ENCODE measurements at regions of chr1 and their contacts with region 1.

Region 1: GRCh38 chr1:226308723-226309315 is at the start of gene LIN9:
- DNase-seq: peak; percentile 91
- H3K4me3 ChIP-seq: peak within 1 kb of the TSS; percentile 81 to 98 (median 85)
- H3K27ac ChIP-seq: peak within 1 kb of the TSS; percentile 75
- H3K4me1 ChIP-seq: peaks cover 13% of the 10 kb centered on the region
- H3K27me3 ChIP-seq: peaks cover 2 to 4% of the 10 kb centered on the region in 2 experiments
- CTCF ChIP-seq: peak in 1 of 2 donors; percentile 5
- POLR2A ChIP-seq: peak; percentile 54
- total RNA-seq, gene LIN9: 7.6 and 9.4 TPM in 2 replicates

Region 2: GRCh38 chr1:226186124-226187018 is 122.4 kb before region 1 on chr1 and contains the start of gene ACBD3:
- CTCF ChIA-PET with region 1: no interaction called
- POLR2A ChIA-PET with region 1: no interaction called
- dilution Hi-C with region 1: no loop called
- intact Hi-C with region 1: loop called (anchors 1 kb)
- DNase-seq: peak; percentile 82
- H3K4me3 ChIP-seq: peak within 1 kb of the TSS; percentile 68 to 93 (median 70)
- H3K27ac ChIP-seq: peak within 1 kb of the TSS; percentile 66
- H3K4me1 ChIP-seq: peaks cover 12% of the 10 kb centered on the region
- H3K27me3 ChIP-seq: no peaks in the 10 kb centered on the region
- CTCF ChIP-seq: peak in 1 of 2 donors; percentile 8
- POLR2A ChIP-seq: peak; percentile 84
- total RNA-seq, gene ACBD3: 36.4 and 37.0 TPM in 2 replicates

Region 3: DNA sequence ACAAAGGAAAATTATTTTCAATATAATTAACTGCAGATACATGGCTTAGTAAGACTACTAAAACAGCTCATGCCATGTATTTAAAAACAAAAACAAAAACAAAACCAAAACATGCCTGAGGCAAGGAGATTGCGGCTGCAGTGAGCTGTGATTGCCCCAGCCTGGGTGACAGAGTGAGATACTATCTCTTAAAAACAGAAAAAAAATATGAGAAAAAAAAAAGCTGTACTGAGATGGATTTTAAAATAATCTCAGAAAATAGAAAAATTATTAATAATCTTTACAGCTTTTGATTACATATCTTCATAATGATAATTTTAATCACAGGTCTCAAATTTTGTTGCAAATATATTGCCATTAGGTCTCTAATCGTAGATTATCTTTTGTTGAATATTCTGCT is 24.1 kb after region 1 on chr1:
- CTCF ChIA-PET with region 1: interaction called, 18 read pairs
- POLR2A ChIA-PET with region 1: no interaction called
- dilution Hi-C with region 1: no loop called
- intact Hi-C with region 1: loop called (anchors 2 kb)
- DNase-seq: no peak
- H3K4me3 ChIP-seq: no peak overlapping the region
- H3K27ac ChIP-seq: no peak overlapping the region
- H3K4me1 ChIP-seq: no peaks in the 10 kb centered on the region
- H3K27me3 ChIP-seq: no peaks in the 10 kb centered on the region
- CTCF ChIP-seq: no peak
- POLR2A ChIP-seq: no peak

Measured in endothelial cell of umbilical vein (primary cell).